MCF 10A (cell line): ENCODE measurements at regions of chr9 and their contacts with region 1.

Region 1: DNA sequence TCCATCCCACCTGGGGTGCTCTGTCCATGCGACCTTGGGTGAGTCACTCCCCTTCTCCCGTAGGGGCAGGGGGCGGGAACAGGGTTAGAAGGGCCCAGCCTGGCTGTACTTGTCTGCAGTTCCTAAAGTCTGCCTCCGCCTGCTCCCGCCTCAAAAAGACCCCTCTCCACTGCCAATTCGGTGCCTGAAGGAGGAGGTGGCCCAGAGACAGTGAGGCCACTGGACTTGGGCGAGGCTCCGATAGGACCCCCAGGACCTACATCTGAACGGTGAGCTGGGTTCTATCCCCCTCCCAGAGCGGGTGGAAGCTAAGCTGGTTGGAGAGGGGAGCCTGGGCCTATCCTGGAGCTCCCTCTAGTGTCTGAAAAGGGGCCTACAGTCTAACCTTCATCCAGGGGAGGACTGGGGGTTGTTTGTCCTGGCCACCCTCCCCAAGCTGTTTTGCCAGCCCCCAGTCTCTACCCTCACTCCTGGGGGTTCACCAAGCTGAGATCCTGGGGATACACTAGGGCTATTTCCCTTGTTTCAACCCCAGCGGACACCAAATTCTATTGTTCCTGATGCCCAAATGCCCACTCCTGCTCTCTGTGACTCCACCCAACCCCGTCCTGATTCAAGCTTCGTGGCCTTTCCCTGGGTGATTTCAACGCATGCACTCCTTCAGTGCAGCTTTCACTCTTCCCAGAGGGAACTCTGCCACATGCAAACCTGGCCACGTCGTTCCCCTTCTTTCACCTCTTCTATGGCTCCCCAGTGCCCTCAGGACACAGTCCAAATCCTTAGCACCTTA is 6.1 kb upstream of the CRB2 start:
- DNase-seq: peak; percentile 65
- H3K4me3 Mint-ChIP-seq: no peak overlapping the region
- H3K27ac Mint-ChIP-seq: no peak overlapping the region
- H3K4me1 Mint-ChIP-seq: peaks cover 9% of the 10 kb centered on the region
- H3K27me3 Mint-ChIP-seq: peaks cover 43% of the 10 kb centered on the region
- CTCF ChIP-seq: peak; percentile 95

Region 2: DNA sequence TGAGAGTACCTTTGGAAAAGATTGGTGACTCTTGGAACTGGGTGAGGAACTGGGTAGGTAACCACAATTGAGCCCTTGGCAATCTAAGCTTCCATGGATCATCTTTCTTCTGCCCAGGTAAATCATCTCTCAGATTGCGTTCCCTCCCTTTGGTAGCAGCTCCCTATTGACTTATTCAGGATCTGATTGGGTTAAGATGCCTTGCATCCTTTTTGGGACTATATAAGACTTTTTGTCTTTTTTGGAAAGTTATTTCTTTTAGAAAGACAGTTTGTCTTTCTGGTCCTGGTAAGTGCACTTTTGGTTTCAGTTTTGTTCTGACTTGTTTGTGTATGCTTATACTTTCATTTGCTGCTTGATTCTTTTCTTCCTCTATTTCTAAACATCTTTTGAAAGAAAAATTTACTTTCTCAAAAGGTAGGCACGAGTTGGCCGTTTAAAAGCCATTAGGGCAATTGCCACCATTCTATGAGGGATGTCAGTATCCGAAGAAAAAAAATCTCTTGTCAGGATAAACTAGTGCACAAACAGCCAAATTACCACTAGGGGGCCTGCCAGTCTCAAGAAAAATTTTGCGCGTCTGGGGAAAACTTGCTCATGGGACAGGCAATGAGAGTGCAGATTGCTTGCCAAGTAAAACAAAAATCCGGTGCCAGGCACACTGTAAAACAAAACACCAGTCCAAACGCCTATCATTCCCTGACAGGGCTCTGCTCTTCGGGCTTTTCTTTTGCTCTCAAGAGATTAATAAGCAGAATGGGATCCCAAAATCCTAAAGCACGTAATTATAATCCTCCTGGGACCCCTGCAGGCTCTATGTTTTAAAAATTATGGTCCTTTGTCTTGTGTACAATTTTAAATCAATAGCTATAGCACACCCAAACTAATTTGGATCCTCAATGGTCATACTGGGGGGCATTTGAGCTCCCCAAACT is 885.0 kb before region 1 on chr9:
- CTCF ChIA-PET with region 1: no interaction called
- POLR2A ChIA-PET with region 1: no interaction called
- intact Hi-C with region 1: loop called (anchors 2 kb)
- DNase-seq: peak; percentile 95
- H3K4me3 Mint-ChIP-seq: peak overlapping the region; percentile 71
- H3K27ac Mint-ChIP-seq: peak overlapping the region; percentile 41
- H3K4me1 Mint-ChIP-seq: peaks cover 5% of the 10 kb centered on the region
- H3K27me3 Mint-ChIP-seq: peaks cover 71% of the 10 kb centered on the region
- CTCF ChIP-seq: peak; percentile 78

Region 3: DNA sequence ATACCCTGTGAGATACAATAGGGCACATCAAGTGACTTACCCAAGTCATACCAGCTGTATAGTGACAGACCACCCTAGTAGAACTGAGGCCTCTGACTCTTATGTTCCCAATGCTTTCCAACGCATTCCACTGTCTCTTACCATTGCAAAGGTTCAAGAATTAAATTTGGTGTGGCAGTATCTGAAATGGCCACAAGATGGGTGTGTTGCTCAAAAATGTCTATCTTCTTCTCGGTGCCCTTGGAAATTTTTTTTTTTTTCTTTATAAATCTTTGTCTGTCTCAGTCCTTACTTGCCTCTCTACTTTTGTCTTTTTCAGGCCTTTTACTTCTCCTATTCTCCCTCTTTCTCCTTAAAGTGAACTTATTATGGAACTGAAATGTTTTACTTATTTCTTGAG is 268.1 kb before region 1 on chr9:
- CTCF ChIA-PET with region 1: interaction called, 82 read pairs
- POLR2A ChIA-PET with region 1: no interaction called
- intact Hi-C with region 1: loop called (anchors 1 kb)
- DNase-seq: peak; percentile 50
- H3K4me3 Mint-ChIP-seq: no peak overlapping the region
- H3K27ac Mint-ChIP-seq: peak overlapping the region; percentile 13
- H3K4me1 Mint-ChIP-seq: no peaks in the 10 kb centered on the region
- H3K27me3 Mint-ChIP-seq: no peaks in the 10 kb centered on the region
- CTCF ChIP-seq: peak; percentile 46

Region 4: GRCh38 chr9:123102375-123103110 is 247.3 kb before region 1 on chr9:
- CTCF ChIA-PET with region 1: interaction called, 88 read pairs
- POLR2A ChIA-PET with region 1: no interaction called
- intact Hi-C with region 1: loop called (anchors 1 kb)
- DNase-seq: peak; percentile 6
- H3K4me3 Mint-ChIP-seq: no peak overlapping the region
- H3K27ac Mint-ChIP-seq: no peak overlapping the region
- H3K4me1 Mint-ChIP-seq: no peaks in the 10 kb centered on the region
- H3K27me3 Mint-ChIP-seq: no peaks in the 10 kb centered on the region
- CTCF ChIP-seq: peak; percentile 23

Region 5: DNA sequence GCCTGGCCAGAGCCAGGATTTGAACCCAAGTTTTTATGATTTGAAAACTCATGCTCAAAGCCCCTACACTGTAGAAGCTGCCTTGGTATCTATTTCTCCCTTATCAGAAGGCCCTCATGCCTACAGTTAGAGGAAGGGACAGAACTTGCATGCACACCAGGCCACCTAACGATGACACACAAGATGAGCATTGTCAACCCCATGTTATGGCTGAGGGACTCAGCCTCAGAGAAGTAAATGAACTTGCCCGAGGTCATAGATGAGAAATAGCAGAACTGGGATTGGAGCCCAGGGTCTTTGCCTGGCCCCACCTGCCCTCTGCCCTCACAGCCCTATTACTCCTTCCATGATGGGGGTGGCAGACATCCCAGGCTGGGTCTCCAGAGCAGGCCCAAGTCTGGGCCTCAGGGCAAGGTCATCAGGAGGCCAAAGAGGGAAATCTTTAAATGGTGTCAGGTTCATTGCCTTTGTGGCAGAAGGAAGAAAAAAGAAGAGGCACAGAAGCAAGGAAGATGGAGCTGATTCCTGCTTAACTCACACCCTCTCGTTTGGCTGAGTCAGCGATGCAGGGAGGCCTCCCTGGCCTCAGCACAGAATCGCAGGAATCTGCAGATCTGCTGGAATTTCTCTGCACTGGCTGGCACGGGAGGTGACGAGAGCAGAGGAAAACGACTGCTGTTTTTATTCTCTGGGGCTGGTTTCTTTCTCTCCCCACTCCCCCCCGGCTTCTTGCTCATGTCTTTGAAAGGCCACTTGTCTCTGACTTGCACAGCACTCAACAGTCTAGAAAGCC is 14.5 kb before region 1 on chr9:
- CTCF ChIA-PET with region 1: interaction called, 17 read pairs
- POLR2A ChIA-PET with region 1: no interaction called
- intact Hi-C with region 1: no loop called
- DNase-seq: no peak
- H3K4me3 Mint-ChIP-seq: no peak overlapping the region
- H3K27ac Mint-ChIP-seq: no peak overlapping the region
- H3K4me1 Mint-ChIP-seq: peaks cover 10% of the 10 kb centered on the region
- H3K27me3 Mint-ChIP-seq: no peaks in the 10 kb centered on the region
- CTCF ChIP-seq: no peak

Region 6: GRCh38 chr9:123389070-123389469 is 39.2 kb after region 1 on chr9:
- CTCF ChIA-PET with region 1: interaction called, 6 read pairs
- POLR2A ChIA-PET with region 1: no interaction called
- intact Hi-C with region 1: loop called (anchors 1 kb)
- DNase-seq: no peak
- H3K4me3 Mint-ChIP-seq: no peak overlapping the region
- H3K27ac Mint-ChIP-seq: no peak overlapping the region
- H3K4me1 Mint-ChIP-seq: no peaks in the 10 kb centered on the region
- H3K27me3 Mint-ChIP-seq: no peaks in the 10 kb centered on the region
- CTCF ChIP-seq: no peak